Cardiac septum (tissue), 1 donor: ENCODE measurements at regions of chr2 and their contacts with region 1.

Region 1: DNA sequence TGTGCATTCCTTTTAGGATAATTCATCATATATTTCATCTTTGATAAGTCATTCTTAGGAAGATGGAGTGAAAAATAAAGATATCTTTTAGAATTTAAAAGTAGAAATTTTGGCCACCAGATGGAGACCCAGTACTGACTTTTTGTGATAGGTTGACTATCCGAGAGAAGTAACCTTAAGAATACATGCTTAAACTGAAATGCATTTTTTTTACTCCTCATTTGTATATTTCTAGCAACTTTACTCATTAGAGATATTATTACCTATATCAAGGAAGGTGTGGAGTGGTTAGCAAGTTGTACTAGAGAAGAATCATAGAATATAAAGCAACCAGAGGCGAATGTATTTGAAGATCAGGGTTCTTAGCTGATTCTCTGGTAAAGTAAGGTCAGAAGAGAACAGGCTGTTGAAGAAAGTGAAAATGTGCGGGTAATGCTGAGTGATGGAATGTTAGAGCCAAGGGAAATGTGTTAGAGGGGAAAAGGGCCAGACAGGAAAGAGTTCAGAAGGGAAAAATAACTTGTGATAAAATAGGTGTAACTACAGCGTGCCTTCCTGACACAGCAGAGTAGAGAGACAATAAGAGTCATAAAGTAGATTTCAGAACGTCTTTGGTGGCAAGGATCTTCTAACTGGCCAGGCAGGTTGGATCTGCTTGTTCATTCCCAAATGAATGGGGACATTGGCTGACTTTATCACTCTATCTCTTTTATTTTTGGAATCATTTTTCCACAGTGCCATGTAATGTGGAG is 52.3 kb downstream of the TDRD15 start:
- DNase-seq: no peak

Region 2: DNA sequence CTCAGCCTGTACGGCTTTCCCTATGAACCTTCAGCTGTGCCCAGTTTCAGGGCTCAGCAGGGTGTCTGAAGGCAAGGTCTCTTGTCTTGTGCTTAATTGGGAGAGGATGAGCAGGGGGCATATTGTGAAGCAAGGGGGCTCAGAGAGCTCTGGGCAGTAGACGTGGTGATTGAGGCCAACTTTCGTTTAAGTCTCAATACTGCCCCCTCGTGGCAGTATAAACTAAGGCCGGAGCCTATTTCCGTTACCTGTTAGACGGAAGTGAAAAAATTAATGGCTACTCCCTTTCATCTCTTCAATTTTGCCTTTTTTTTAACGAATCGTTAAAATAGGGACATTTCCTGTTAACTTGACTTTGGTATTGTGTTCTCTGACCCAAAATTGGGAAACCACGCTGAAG is 141.1 kb after region 1 on chr2:
- intact Hi-C with region 1: loop called (anchors 1 kb)
- DNase-seq: no peak